ENCODE measurements at regions of chr6 and their contacts with region 1.

Region 1: GRCh38 chr6:151765444-151765886 is 42.0 kb upstream of the ESR1 start:
- DNase-seq: peak in 1 of 2 donors; percentile 75
- H3K4me3 ChIP-seq: no peak overlapping the region
- H3K27ac ChIP-seq: no peak overlapping the region
- H3K4me1 ChIP-seq: peaks cover 0 to 6% of the 10 kb centered on the region in 2 donors
- H3K27me3 ChIP-seq: no peaks in the 10 kb centered on the region
- CTCF ChIP-seq: peak; percentile 39 to 78 (median 74)

Region 2: GRCh38 chr6:151690768-151691562 is 74.5 kb before region 1 on chr6:
- intact Hi-C with region 1: loop called (anchors 5 kb)
- DNase-seq: no peak
- H3K4me3 ChIP-seq: peak overlapping the region; percentile 31 to 49
- H3K27ac ChIP-seq: peak overlapping the region; percentile 63 to 71
- H3K4me1 ChIP-seq: no peaks in the 10 kb centered on the region
- H3K27me3 ChIP-seq: no peaks in the 10 kb centered on the region
- CTCF ChIP-seq: no peak

Region 3: DNA sequence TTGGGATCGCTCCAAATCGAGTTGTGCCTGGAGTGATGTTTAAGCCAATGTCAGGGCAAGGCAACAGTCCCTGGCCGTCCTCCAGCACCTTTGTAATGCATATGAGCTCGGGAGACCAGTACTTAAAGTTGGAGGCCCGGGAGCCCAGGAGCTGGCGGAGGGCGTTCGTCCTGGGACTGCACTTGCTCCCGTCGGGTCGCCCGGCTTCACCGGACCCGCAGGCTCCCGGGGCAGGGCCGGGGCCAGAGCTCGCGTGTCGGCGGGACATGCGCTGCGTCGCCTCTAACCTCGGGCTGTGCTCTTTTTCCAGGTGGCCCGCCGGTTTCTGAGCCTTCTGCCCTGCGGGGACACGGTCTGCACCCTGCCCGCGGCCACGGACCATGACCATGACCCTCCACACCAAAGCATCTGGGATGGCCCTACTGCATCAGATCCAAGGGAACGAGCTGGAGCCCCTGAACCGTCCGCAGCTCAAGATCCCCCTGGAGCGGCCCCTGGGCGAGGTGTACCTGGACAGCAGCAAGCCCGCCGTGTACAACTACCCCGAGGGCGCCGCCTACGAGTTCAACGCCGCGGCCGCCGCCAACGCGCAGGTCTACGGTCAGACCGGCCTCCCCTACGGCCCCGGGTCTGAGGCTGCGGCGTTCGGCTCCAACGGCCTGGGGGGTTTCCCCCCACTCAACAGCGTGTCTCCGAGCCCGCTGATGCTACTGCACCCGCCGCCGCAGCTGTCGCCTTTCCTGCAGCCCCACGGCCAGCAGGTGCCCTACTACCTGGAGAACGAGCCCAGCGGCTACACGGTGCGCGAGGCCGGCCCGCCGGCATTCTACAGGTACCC is 42.3 kb after region 1 on chr6 and contains the start of gene ESR1:
- intact Hi-C with region 1: loop called (anchors 5 kb)
- DNase-seq: no peak
- H3K4me3 ChIP-seq: peak within 1 kb of the TSS; percentile 64 to 75
- H3K27ac ChIP-seq: peak within 1 kb of the TSS; percentile 36 to 58
- H3K4me1 ChIP-seq: peaks cover 7 to 21% of the 10 kb centered on the region in 2 donors
- H3K27me3 ChIP-seq: no peaks in the 10 kb centered on the region
- CTCF ChIP-seq: no peak
- total RNA-seq, gene ESR1: 3.0 TPM

Region 4: GRCh38 chr6:152124429-152125074 is 359.1 kb after region 1 on chr6:
- intact Hi-C with region 1: loop called (anchors 2 kb)
- DNase-seq: no peak
- H3K4me3 ChIP-seq: no peak overlapping the region
- H3K27ac ChIP-seq: no peak overlapping the region
- H3K4me1 ChIP-seq: peaks cover 0 to 7% of the 10 kb centered on the region in 2 donors
- H3K27me3 ChIP-seq: no peaks in the 10 kb centered on the region
- CTCF ChIP-seq: peak; percentile 70 to 75 (median 73)

Region 5: DNA sequence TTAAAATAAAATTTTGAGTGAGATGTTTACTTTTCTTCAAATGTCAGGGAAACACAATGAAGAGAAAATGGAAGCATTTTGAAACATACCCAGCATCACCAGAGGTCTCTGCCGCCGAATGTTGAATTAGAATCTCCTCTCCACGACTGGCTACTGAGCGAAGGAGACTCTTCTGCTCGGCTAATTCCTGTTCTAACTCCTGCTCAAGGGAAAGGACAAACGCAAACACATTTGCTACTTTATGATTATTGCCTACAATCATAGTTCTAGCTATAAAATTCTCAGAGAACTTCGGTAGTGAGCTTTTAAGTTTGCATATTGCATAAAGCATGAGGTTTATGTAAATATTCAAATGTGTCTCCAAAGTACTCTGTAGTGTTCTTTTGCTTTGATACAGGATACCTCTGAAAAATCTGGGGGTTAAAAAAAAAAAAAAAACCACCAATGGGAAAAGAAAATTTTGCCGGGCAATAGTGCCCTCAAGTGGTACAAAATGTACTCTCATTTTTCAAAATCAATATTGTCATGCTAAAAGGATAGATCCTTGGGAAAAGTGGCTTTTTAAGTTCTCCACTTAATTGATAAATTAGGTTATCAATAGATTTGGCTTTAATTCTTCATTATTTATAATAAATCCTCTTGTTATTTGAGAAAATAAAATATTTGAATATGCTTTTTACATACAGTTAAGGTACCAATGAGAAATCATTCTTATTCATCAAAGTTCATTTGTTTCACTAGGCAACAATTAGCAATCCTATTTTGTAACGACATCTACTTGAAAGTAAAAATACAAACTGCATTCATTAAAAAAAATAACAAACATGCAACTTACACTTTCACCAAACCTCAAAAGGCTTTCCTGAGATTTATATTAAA is 502.7 kb after region 1 on chr6:
- intact Hi-C with region 1: loop called (anchors 5 kb)
- DNase-seq: no peak
- H3K4me3 ChIP-seq: no peak overlapping the region
- H3K27ac ChIP-seq: peak overlapping the region; percentile 35 to 81
- H3K4me1 ChIP-seq: peaks cover 7 to 52% of the 10 kb centered on the region in 2 donors
- H3K27me3 ChIP-seq: no peaks in the 10 kb centered on the region
- CTCF ChIP-seq: peak in 2 of 3 experiments; percentile 43 to 56

Measured in ascending aorta (tissue), 2 donors.